Caco-2 (cell line): ENCODE measurements at regions of chr6 and their contacts with region 1.

Region 1: DNA sequence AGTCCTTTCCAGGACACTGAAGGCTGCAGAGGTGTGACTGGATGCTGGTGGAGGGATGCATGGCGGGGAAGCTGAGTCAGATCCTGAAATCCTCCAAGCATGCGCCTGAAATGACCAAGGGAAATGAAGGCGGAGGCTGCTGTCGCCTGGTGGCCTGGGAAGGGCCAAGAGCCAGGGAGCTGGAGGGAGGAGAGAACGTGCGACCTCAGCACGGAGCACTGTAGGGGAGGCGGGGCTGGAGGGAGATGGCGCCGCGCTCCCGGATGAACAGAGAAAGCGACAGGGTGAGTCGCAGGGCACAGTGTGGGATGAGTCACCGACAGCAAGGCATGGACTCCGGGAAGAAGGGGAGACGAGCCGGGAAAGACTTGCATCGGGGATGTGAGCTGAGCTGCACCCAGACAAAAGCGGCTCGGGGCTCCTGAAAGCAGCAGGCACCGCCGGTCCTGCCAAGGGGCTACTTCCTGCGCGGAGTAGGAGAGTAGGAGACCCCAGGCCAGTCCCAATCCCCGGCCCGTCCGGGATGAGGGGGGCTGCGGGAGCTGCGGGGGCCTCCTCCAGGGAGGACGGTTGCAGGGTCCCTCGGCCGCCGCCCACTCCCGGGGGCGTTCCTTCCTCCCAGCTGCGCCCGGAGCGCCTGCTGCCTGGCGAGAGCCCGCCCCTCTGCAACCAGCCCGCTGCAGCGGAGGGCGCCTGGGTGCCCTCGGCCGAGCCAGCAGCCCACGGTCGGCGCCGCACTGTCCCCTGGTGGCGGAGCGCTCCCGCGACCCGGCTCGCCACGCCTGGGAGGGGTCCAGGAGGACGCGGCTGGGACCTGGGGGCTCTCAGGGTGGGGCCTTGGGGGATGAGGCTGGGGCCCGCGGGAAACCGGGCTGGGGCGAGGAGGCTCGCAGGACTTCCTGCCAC is 11.0 kb upstream of the NQO2 start:
- DNase-seq: peak; percentile 92 to 94
- H3K4me3 ChIP-seq: peak overlapping the region; percentile 79
- H3K4me3 Mint-ChIP-seq: peak overlapping the region; percentile 76
- H3K27ac Mint-ChIP-seq: peak overlapping the region; percentile 97
- H3K4me1 ChIP-seq: peaks cover 6% of the 10 kb centered on the region; the same call in 1 of the 2 replicates
- H3K4me1 Mint-ChIP-seq: peaks cover 12% of the 10 kb centered on the region
- H3K27me3 ChIP-seq: no peaks in the 10 kb centered on the region
- H3K27me3 Mint-ChIP-seq: no peaks in the 10 kb centered on the region
- CTCF ChIP-seq: peak; percentile 79 to 86

Region 2: DNA sequence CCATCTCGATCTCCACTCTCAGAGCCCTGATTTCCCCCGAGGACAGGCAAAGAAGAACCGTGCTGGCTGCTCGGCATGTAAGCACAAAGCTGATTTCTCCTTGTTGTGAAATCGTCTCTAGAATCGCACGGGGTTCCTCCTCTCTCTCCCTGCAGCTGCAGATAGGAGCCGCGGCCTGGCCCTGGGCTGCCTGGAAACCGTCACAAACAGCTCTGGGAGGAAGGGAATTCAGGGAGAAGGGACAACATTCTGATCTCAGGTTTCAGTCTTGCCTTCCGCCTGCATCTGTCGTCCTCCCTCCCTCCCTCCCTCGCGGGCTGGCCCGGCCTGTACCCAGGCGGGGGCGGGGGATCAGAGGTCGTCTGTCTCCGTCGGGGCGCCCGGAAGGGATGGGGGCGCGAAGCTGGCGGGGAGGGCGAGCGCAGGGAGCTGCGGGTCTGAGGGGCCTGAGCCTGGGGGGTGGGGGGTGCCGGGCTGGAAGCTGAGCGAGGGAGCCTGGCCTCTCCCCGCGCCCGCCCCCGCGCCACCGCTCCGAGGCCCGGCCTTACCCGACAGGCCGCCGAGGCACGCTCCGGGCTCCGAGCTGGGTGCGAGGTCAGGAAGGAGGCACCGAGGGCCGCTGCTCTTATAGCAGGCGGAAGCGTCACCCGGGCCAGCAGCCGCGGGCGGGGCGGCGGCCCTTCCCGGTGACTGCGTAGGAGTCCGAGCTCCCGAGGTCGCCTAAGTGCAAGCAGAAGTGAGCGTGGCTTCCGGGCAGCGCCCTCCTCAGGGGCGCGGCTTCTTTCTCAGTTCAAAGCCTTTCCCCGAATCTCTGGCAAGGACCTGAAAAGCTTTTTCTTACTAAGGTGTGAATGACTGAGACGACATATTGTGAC is 147.2 kb before region 1 on chr6 and contains the start of gene SERPINB1:
- CTCF ChIA-PET with region 1: interaction called, 21 read pairs
- POLR2A ChIA-PET with region 1: interaction called, 32 read pairs
- intact Hi-C with region 1: loop called (anchors 1 kb)
- DNase-seq: peak; percentile 92 to 93
- H3K4me3 ChIP-seq: peak within 1 kb of the TSS; percentile 44
- H3K4me3 Mint-ChIP-seq: peak within 1 kb of the TSS; percentile 98
- H3K27ac Mint-ChIP-seq: peak within 1 kb of the TSS; percentile 97
- H3K4me1 ChIP-seq: peaks cover 42% of the 10 kb centered on the region
- H3K4me1 Mint-ChIP-seq: peaks cover 16% of the 10 kb centered on the region
- H3K27me3 ChIP-seq: no peaks in the 10 kb centered on the region
- H3K27me3 Mint-ChIP-seq: no peaks in the 10 kb centered on the region
- CTCF ChIP-seq: peak in 1 of 2 experiments; percentile 29
- total RNA-seq, gene SERPINB1: 75.6 and 81.9 TPM in 2 replicates

Region 3: GRCh38 chr6:2931970-2932748 is 56.5 kb before region 1 on chr6:
- CTCF ChIA-PET with region 1: interaction called, 7 read pairs
- POLR2A ChIA-PET with region 1: interaction called, 3 read pairs
- intact Hi-C with region 1: loop called (anchors 1 kb)
- DNase-seq: peak; percentile 85 to 90
- H3K4me3 ChIP-seq: no peak overlapping the region
- H3K4me3 Mint-ChIP-seq: no peak overlapping the region
- H3K27ac Mint-ChIP-seq: no peak overlapping the region
- H3K4me1 ChIP-seq: no peaks in the 10 kb centered on the region
- H3K4me1 Mint-ChIP-seq: peaks cover 11% of the 10 kb centered on the region
- H3K27me3 ChIP-seq: no peaks in the 10 kb centered on the region
- H3K27me3 Mint-ChIP-seq: no peaks in the 10 kb centered on the region
- CTCF ChIP-seq: peak; percentile 91 to 97

Region 4: DNA sequence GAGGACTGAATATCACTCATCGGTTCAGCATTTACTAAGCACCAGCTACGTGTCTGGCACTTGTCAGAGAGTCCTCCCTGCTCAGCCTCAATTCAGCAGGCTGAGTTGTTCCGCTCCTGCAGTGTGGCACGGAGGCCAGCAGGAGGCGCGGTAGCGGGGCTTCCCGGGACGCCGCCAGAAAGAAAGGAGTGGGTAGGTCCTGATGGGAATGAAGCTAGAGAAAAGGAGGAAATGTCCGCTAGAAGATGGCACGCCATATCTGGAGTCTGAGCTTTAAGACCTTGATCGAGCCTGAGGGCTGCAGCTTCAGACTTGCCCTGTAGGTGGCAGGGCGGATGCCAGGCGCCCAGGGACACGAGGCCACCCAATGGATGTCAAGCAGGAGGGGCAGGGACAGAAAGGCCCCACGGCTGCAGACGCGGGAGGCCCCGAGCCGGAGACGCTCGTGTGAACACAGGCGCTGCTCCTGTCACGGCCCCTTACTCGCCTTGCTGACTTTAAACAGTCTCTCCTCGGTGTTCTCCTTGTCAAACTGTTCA is 36.1 kb before region 1 on chr6:
- CTCF ChIA-PET with region 1: interaction called, 32 read pairs
- POLR2A ChIA-PET with region 1: interaction called, 3 read pairs
- intact Hi-C with region 1: loop called (anchors 1 kb)
- DNase-seq: peak; percentile 60 to 67
- H3K4me3 ChIP-seq: no peak overlapping the region
- H3K4me3 Mint-ChIP-seq: no peak overlapping the region
- H3K27ac Mint-ChIP-seq: no peak overlapping the region
- H3K4me1 ChIP-seq: peaks cover 4% of the 10 kb centered on the region; the same call in 1 of the 2 replicates
- H3K4me1 Mint-ChIP-seq: peaks cover 8% of the 10 kb centered on the region
- H3K27me3 ChIP-seq: no peaks in the 10 kb centered on the region
- H3K27me3 Mint-ChIP-seq: no peaks in the 10 kb centered on the region
- CTCF ChIP-seq: peak; percentile 46 to 84

Region 5: GRCh38 chr6:3068329-3069214 is 79.9 kb after region 1 on chr6 and contains the start of gene RIPK1:
- CTCF ChIA-PET with region 1: interaction called, 3 read pairs
- POLR2A ChIA-PET with region 1: interaction called, 11 read pairs
- intact Hi-C with region 1: no loop called
- DNase-seq: peak; percentile 94 to 97
- H3K4me3 ChIP-seq: peak within 1 kb of the TSS; percentile 94
- H3K4me3 Mint-ChIP-seq: peak within 1 kb of the TSS; percentile 81
- H3K27ac Mint-ChIP-seq: peak within 1 kb of the TSS; percentile 79
- H3K4me1 ChIP-seq: peaks cover 9% of the 10 kb centered on the region; the same call in 1 of the 2 replicates
- H3K4me1 Mint-ChIP-seq: peaks cover 6% of the 10 kb centered on the region
- H3K27me3 ChIP-seq: no peaks in the 10 kb centered on the region
- H3K27me3 Mint-ChIP-seq: no peaks in the 10 kb centered on the region
- CTCF ChIP-seq: peak; percentile 26 to 37
- total RNA-seq, gene RIPK1: 15.5 and 15.6 TPM in 2 replicates